Activated naive CD8-positive, alpha-beta T cell treated with anti-CD3 and anti-CD28 coated beads, Interleukin-2, amount 10 ng/mL, durations not matched to agents 7 days and 5 days (primary cell): ENCODE measurements at regions of chr10 and their contacts with region 1.

Region 1: GRCh38 chr10:103367782-103368518 is at the start of gene TAF5:
- DNase-seq: peak; percentile 87
- ATAC-seq: peak; percentile 49
- H3K4me3 Mint-ChIP-seq: peak within 1 kb of the TSS; percentile 94
- H3K27ac Mint-ChIP-seq: peak within 1 kb of the TSS; percentile 96
- H3K4me1 Mint-ChIP-seq: peaks cover 16% of the 10 kb centered on the region
- H3K27me3 Mint-ChIP-seq: no peaks in the 10 kb centered on the region
- total RNA-seq, gene TAF5: 11.6 to 12.1 TPM

Region 2: DNA sequence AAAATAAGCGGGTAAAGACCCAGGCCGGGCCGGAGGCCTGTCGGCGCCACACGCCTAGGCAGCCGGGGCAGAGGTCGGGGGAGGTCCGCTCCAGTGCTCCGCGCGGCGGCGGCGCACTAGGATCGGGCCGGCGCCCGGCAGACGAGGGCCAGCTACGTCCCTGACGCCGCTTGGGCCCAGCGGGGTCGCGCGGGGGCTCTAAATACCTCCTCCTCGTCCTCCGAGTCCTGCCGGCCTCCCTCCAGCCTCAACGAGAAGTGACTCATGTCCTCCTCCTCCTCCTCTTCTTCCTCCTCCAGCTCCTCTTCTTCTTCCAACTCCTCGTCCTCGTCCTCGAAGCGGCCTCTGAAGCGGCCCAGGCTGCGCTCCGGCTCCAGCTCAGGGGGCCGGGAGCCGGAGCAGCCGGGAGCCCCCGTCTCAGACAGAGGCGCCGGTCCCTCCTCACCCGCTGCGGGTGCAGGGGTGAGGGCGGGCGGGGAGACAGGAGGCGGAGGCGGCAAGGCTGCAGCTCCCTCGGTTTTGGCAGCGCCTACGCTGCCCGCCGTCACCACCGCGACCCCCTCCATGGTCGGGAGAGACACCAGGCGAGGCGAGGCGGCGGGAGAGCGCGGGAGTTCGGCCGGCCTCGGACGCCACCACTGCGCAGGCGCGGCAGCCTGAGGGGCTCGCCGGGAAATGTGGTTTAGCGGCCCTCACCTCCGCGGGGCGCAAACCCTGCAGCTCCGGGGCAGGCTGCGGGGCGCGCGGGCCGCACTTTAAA is 17.3 kb before region 1 on chr10 and contains the start of gene PCGF6:
- POLR2A ChIA-PET with region 1: interaction called, 42 read pairs
- DNase-seq: peak; percentile 87
- ATAC-seq: peak; percentile 83
- H3K4me3 Mint-ChIP-seq: peak within 1 kb of the TSS; percentile 97
- H3K27ac Mint-ChIP-seq: peak within 1 kb of the TSS; percentile 93
- H3K4me1 Mint-ChIP-seq: peaks cover 3% of the 10 kb centered on the region
- H3K27me3 Mint-ChIP-seq: no peaks in the 10 kb centered on the region
- total RNA-seq, gene PCGF6: 13.6 to 14.7 TPM

Region 3: DNA sequence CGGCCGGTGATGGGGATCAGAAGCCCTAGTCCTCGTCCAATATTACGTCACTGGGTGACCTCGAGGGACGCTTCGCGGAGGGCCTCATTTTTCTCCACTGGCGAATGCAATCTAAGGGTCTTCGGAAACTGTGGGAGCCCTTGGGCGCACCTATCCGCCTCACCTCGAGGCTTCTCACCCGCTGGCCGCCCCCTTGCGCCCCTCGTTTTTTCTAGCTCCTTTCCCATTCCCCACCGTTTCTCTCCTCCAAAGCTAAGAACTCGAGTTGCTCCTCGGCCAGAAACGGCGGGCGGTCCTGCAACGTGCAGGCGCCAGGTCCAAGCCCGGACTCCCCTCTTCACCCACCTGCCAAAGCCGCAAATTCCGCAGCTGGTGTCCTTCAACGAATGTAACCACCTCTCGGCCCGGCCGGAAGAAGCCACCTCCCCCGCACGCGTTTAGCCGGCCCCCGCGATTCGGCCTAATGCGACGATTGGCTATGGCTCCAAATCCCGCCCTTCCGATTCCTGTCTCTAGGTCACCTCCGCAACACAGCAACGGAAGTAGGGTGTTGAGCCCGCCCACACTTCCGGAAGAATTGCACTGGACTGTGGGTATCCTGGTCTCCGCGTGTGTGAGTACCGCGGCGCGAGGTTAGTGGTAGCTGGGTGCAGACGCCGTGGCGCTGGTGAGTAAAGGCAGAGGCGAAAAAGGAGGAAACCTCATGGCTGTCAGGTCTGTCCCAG is 28.3 kb after region 1 on chr10 and contains the starts of genes ATP5MK and PDCD11:
- POLR2A ChIA-PET with region 1: interaction called, 27 read pairs
- DNase-seq: peak; percentile 88
- ATAC-seq: peak; percentile 98
- H3K4me3 Mint-ChIP-seq: peak within 1 kb of the TSS; percentile 93
- H3K27ac Mint-ChIP-seq: peak within 1 kb of the TSS; percentile 91
- H3K4me1 Mint-ChIP-seq: peaks cover 45% of the 10 kb centered on the region
- H3K27me3 Mint-ChIP-seq: no peaks in the 10 kb centered on the region
- total RNA-seq, gene ATP5MK: 264 to 291 TPM
- total RNA-seq, gene PDCD11: 45.1 to 49.9 TPM